ENCODE measurements at regions of chr11 and their contacts with region 1.

Region 1: DNA sequence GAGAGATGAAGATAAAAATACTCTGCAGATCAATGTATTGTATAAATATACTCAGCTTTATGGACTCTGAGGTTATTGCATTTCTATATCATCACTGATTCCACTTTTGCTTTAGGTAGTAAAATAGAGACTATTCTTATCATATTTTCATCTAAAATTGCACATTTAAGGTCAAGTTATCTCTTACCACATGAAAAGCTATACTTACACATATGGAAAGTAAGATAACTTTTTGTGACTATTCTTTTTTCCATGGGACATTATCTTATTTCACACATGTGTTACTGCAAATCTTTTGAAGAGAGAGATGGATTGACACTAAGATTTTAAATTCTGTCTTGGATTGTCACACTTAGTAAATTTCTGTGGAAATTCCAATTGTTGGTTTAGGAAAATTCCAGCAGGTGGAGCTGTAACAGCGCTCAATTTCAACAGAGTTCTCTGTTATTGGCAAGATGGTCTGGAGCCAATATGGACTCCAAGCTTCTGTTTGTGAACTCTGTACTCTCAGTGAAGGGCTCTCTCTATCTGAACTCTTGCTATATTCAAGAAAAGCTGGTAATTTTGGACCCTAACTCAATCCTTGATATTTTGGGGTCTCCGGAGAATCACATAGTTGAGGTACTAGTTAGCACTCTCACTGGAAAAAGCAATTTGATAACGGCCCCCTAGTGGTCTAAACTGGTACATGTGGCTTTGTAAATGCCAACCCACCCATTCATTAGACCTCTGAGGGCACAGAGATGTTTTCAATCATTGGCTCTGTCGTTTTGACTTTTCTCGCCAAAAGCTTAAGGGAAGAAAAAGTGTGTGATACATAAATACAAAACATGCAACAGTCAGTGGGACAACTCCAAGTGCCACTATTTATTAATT is 429.7 kb downstream of the ETS1 start:
- H3K4me3 ChIP-seq: peak overlapping the region; percentile 21
- H3K27ac ChIP-seq: no peak overlapping the region
- H3K4me1 ChIP-seq: no peaks in the 10 kb centered on the region
- CTCF ChIP-seq: peak; percentile 25; the same call in 1 of the 2 replicates

Region 2: DNA sequence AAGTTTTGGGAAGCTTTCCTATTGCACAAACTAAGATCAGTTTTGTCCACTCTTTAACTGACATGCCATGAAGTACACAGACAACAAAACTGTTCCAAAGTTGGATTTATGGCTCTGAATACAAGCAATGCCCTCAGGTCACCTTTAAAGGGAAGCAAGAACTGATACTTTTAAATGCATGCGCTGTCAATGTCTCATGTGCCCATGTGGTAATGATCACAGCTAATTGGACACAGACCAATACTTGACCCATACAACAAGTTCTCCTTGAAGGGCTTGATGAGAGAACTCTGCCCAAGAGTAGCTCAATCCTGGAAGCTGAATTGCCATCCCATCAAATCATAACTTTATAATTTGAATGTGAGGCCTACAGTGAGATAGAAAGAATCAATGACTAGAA is 195.2 kb before region 1 on chr11:
- CTCF ChIA-PET with region 1: no interaction called
- POLR2A ChIA-PET with region 1: no interaction called
- H3K4me3 ChIP-seq: no peak overlapping the region
- H3K27ac ChIP-seq: no peak overlapping the region
- H3K4me1 ChIP-seq: no peaks in the 10 kb centered on the region
- CTCF ChIP-seq: no peak

Region 3: GRCh38 chr11:128039140-128040021 is 118.3 kb before region 1 on chr11:
- CTCF ChIA-PET with region 1: interaction called, 32 read pairs
- POLR2A ChIA-PET with region 1: no interaction called
- H3K4me3 ChIP-seq: no peak overlapping the region
- H3K27ac ChIP-seq: no peak overlapping the region
- H3K4me1 ChIP-seq: no peaks in the 10 kb centered on the region
- CTCF ChIP-seq: no peak

Region 4: DNA sequence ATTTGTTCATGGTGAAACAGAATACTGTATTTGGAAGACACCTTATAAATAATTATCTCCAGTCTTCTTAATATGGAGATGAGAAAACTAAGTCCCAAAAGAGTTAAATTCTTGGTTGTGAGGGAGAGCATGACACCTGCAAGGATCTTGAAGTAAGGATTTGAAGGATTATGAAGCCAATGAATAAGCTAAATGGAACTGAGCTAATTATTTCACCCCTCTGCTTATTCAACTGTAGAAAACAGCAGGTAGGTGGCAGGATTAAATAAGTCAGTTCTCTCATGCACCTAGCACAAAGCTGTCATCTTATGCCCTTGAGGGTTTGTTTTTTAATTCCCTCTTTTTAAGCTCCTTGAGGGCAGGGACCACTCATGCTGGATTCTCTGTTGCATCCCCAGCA is 27.6 kb before region 1 on chr11:
- CTCF ChIA-PET with region 1: interaction called, 16 read pairs
- POLR2A ChIA-PET with region 1: no interaction called
- H3K4me3 ChIP-seq: no peak overlapping the region
- H3K27ac ChIP-seq: no peak overlapping the region
- H3K4me1 ChIP-seq: no peaks in the 10 kb centered on the region
- CTCF ChIP-seq: no peak

Region 5: DNA sequence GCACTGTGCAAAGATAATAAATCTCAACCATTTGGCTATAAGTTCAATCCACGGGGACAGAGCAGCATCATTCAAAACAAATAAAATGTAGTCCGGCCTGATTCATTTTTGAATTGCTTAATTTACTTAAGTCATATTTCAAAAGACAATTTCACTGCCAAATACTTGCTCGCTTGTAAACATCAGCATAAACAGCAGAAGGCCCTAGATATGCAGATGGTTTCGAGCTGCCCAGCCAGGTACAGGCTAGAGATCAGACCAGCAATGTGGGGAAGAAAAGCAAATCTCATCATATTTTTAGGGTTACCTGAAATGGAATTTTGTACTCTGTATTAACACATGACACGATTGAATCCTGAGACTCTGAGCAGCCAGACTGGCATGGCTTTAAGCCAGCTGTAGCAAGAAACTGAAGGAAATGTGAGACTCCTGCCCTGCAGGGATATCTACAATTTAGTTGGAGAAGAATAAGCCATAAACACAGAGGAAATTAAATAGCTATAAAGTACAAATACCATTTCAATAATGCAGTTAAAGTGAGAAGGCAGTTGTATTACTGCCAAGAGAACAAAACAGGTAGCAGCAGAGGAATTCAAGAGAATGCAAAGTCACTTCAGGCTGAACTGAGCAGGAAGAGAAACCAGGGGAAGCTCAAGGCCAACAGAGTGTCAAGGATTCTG is 10.6 kb before region 1 on chr11:
- CTCF ChIA-PET with region 1: interaction called, 61 read pairs
- POLR2A ChIA-PET with region 1: no interaction called
- H3K4me3 ChIP-seq: no peak overlapping the region
- H3K27ac ChIP-seq: no peak overlapping the region; the same call in 1 of the 2 replicates
- H3K4me1 ChIP-seq: peaks cover 5% of the 10 kb centered on the region; the same call in 1 of the 2 replicates
- CTCF ChIP-seq: no peak

Region 6: GRCh38 chr11:128283451-128283850 is 125.8 kb after region 1 on chr11:
- CTCF ChIA-PET with region 1: interaction called, 14 read pairs
- POLR2A ChIA-PET with region 1: no interaction called
- H3K4me3 ChIP-seq: no peak overlapping the region
- H3K27ac ChIP-seq: no peak overlapping the region
- H3K4me1 ChIP-seq: no peaks in the 10 kb centered on the region; the same call in 1 of the 2 replicates
- CTCF ChIP-seq: no peak

Region 7: GRCh38 chr11:128831174-128832120 is 673.8 kb after region 1 on chr11:
- CTCF ChIA-PET with region 1: interaction called, 29 read pairs
- POLR2A ChIA-PET with region 1: no interaction called
- H3K4me3 ChIP-seq: no peak overlapping the region
- H3K27ac ChIP-seq: no peak overlapping the region
- H3K4me1 ChIP-seq: no peaks in the 10 kb centered on the region
- CTCF ChIP-seq: no peak

Measured in HEK293 (cell line).